ENCODE measurements at regions of chr14 and their contacts with region 1.

Region 1: GRCh38 chr14:39102969-39103957 is at the start of gene SEC23A:
- DNase-seq: peak; percentile 91 to 92
- ATAC-seq: peak; percentile 98 to 99 (median 99)
- H3K4me3 ChIP-seq: peak within 1 kb of the TSS; percentile 78 to 97 (median 86)
- H3K27ac ChIP-seq: peak within 1 kb of the TSS; percentile 84 to 99 (median 98)
- H3K4me1 ChIP-seq: peaks cover 2 to 52% (median 48%) of the 10 kb centered on the region in 9 donors
- H3K27me3 ChIP-seq: no peaks in the 10 kb centered on the region
- CTCF ChIP-seq: peak in 2 of 9 donors; percentile 10 to 18
- total RNA-seq, gene SEC23A: 70.0 to 113 (median 82.9) TPM

Region 2: DNA sequence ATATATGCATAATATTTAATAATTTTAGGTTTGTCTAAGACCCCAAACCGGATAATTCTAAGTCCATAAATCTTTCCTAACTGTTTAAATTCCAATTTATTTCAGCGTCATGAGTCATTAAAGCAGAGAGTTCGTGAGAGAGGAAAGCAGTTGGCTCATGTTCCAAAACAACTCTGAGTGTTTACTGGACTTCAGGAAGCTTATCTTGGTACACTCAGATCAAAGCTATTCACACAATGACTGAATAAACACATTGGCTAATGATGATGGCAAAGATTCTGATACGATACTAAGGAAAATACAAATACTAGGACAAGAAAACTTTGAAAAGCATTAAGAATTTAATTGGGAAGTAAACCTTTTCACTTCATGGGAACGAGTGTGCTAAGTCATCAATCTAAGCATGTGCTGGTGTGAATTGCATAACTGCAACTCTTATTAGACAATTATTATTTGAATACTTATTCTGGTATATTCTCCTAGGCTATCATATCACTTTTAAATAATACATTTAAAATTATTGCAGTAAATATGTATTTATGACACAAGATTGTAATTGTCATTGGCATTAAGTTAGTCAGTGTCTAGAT is 812.6 kb before region 1 on chr14:
- intact Hi-C with region 1: loop called in 1 of 10 experiments (anchors 5 kb)
- DNase-seq: peak in 1 of 2 donors; percentile 20
- ATAC-seq: peak in 7 of 8 donors; percentile 65 to 95 (median 90)
- H3K4me3 ChIP-seq: peak overlapping the region in 1 of 10 donors; percentile 6
- H3K27ac ChIP-seq: peak overlapping the region in 9 of 10 donors; percentile 47 to 81 (median 69)
- H3K4me1 ChIP-seq: peaks cover 0 to 32% (median 18%) of the 10 kb centered on the region in 9 donors
- H3K27me3 ChIP-seq: no peaks in the 10 kb centered on the region
- CTCF ChIP-seq: no peak

Region 3: GRCh38 chr14:39025810-39026627 is 77.2 kb before region 1 on chr14:
- intact Hi-C with region 1: no loop called
- DNase-seq: no peak
- ATAC-seq: no peak
- H3K4me3 ChIP-seq: no peak overlapping the region
- H3K27ac ChIP-seq: no peak overlapping the region
- H3K4me1 ChIP-seq: no peaks in the 10 kb centered on the region
- H3K27me3 ChIP-seq: no peaks in the 10 kb centered on the region
- CTCF ChIP-seq: no peak

Region 4: GRCh38 chr14:39174560-39175444 is 71.5 kb after region 1 on chr14 and contains the start of gene PNN:
- intact Hi-C with region 1: loop called in 4 of 10 experiments (anchors 2 to 10 kb)
- DNase-seq: peak; percentile 94 to 98
- ATAC-seq: peak; percentile 95 to 98 (median 97)
- H3K4me3 ChIP-seq: peak within 1 kb of the TSS; percentile 59 to 96 (median 83)
- H3K27ac ChIP-seq: peak within 1 kb of the TSS; percentile 65 to 96 (median 92)
- H3K4me1 ChIP-seq: peaks cover 0 to 31% (median 26%) of the 10 kb centered on the region in 9 donors
- H3K27me3 ChIP-seq: no peaks in the 10 kb centered on the region
- CTCF ChIP-seq: no peak
- total RNA-seq, gene PNN: 16.8 to 31.0 (median 20.5) TPM

Region 5: GRCh38 chr14:39291701-39292100 is 188.4 kb after region 1 on chr14:
- intact Hi-C with region 1: no loop called
- DNase-seq: no peak
- ATAC-seq: peak in 1 of 8 donors; percentile 24
- H3K4me3 ChIP-seq: no peak overlapping the region
- H3K27ac ChIP-seq: no peak overlapping the region
- H3K4me1 ChIP-seq: peaks cover 0 to 10% (median 4%) of the 10 kb centered on the region in 9 donors
- H3K27me3 ChIP-seq: no peaks in the 10 kb centered on the region
- CTCF ChIP-seq: no peak

Region 6: GRCh38 chr14:39368261-39368959 is 265.1 kb after region 1 on chr14:
- intact Hi-C with region 1: loop called in 3 of 10 experiments (anchors 5 kb)
- DNase-seq: peak; percentile 19 to 48
- ATAC-seq: peak; percentile 52 to 86 (median 80)
- H3K4me3 ChIP-seq: no peak overlapping the region
- H3K27ac ChIP-seq: no peak overlapping the region
- H3K4me1 ChIP-seq: peaks cover 0 to 15% (median 8%) of the 10 kb centered on the region in 9 donors
- H3K27me3 ChIP-seq: no peaks in the 10 kb centered on the region
- CTCF ChIP-seq: peak in 8 of 9 donors; percentile 31 to 70 (median 56)

Region 7: DNA sequence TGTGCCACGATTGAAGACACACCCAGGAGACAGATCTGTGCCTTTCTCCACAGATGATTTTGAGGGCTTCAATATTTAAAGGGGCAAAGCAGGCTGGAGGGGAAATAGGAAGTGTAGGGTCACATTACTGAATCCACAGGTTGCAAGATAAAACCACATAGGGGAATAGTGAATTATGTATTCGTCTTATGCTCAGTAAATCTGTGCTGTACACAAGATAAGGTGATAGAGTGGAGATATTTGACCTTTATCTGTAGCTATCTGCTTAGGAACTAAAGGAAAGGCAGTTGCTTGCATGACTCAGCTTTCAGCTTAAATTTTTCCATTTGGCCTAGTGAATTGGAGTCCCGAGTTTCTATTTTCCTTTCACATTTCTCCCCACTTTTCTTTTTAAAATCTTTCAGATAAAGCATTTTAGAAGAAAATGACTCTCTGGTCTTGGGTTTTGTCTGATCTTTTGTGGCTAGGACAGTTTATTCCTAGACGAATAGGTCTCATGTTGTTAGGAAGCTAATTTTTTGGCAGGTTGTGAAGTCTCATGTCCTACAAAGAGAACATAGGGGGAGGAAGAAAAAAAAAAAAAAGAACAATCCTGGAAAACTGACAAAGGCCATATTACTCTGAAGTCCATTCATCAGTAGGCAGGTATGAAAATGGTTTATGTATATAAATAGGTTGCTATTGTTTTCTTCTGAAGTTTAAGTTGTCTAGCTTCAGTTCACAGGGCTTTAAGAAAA is 273.6 kb after region 1 on chr14:
- intact Hi-C with region 1: loop called in 2 of 10 experiments (anchors 5 kb)
- DNase-seq: no peak
- ATAC-seq: peak in 5 of 8 donors; percentile 25 to 79 (median 37)
- H3K4me3 ChIP-seq: no peak overlapping the region
- H3K27ac ChIP-seq: peak overlapping the region in 7 of 10 donors; percentile 22 to 69 (median 50)
- H3K4me1 ChIP-seq: peaks cover 0 to 15% (median 11%) of the 10 kb centered on the region in 9 donors
- H3K27me3 ChIP-seq: no peaks in the 10 kb centered on the region
- CTCF ChIP-seq: no peak

Region 8: DNA sequence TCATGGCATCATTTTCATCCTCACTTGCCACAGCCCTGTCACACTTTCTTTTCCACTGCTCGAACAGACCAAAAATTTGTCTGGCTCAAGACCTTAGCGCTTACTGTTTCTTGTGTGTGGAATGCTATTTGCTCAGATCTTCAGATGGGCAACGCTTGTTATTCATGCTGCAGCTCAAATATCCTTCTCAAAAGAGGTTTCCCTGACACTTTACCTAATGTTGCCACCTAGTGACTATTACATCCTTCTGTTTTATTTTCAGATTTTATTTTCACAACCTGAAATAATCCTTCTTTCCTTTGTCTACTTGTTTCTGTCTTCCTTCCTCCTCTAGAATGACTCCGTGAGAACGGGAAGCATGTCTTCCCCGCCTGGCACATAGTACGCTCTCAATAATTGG is 323.3 kb after region 1 on chr14:
- intact Hi-C with region 1: loop called in 5 of 10 experiments (anchors 5 to 10 kb)
- DNase-seq: no peak
- ATAC-seq: peak in 1 of 8 donors; percentile 7
- H3K4me3 ChIP-seq: no peak overlapping the region
- H3K27ac ChIP-seq: peak overlapping the region in 1 of 10 donors; percentile 33
- H3K4me1 ChIP-seq: peaks cover 0 to 84% (median 68%) of the 10 kb centered on the region in 9 donors
- H3K27me3 ChIP-seq: no peaks in the 10 kb centered on the region
- CTCF ChIP-seq: peak in 5 of 9 donors; percentile 24 to 49 (median 36)

Region 9: DNA sequence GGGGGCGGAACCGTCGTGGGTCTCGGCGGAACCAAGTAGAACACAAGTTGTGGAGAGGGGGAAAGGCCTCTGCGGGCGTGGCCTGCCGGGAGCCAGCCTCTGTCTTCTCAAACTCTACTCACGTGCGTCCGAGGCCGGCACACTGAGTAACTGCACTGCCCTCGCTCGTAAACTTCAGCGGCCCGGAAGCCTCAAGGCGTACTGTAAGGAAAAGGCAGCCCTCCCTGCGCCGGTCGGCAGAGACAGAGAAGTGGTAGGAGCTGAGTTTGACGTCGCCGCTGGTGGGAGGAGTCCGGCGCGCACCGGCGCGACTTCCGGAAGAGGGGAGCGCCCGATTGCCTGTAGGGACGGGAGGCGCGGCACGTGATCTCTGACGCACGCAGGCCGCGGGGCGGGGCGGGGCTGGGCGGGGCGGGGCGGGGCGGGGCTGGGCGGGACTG is 328.9 kb after region 1 on chr14 and contains the start of gene FBXO33:
- intact Hi-C with region 1: loop called in 6 of 10 experiments (anchors 2 to 10 kb)
- DNase-seq: peak; percentile 96 to 97
- ATAC-seq: peak; percentile 95 to 97 (median 95)
- H3K4me3 ChIP-seq: peak within 1 kb of the TSS; percentile 75 to 99 (median 96)
- H3K27ac ChIP-seq: peak within 1 kb of the TSS; percentile 94 to 100 (median 98)
- H3K4me1 ChIP-seq: peaks cover 0 to 46% (median 34%) of the 10 kb centered on the region in 9 donors
- H3K27me3 ChIP-seq: no peaks in the 10 kb centered on the region
- CTCF ChIP-seq: no peak
- total RNA-seq, gene FBXO33: 3.0 to 6.8 (median 5.1) TPM

Measured in heart right ventricle (tissue), 16 donors.